ENCODE measurements at regions of chr11 and their contacts with region 1.

Region 1: GRCh38 chr11:250740-251299 is 14.0 kb downstream of the PSMD13 start:
- DNase-seq: no peak
- ATAC-seq: peak; percentile 94
- H3K4me3 ChIP-seq: no peak overlapping the region
- H3K27ac ChIP-seq: no peak overlapping the region
- H3K4me1 ChIP-seq: no peaks in the 10 kb centered on the region
- H3K27me3 ChIP-seq: no peaks in the 10 kb centered on the region
- CTCF ChIP-seq: peak; percentile 61 to 77 (median 64)
- EP300 ChIP-seq: no peak
- POLR2A ChIP-seq: no peak
- RAD21 ChIP-seq: peak; percentile 63

Region 2: GRCh38 chr11:236774-237767 is 13.7 kb before region 1 on chr11 and contains the start of gene PSMD13:
- CTCF ChIA-PET with region 1: interaction called, 26 read pairs
- POLR2A ChIA-PET with region 1: interaction called, 6 read pairs
- RAD21 ChIA-PET with region 1: interaction called, 7 read pairs
- SMC1A ChIA-PET with region 1: interaction called, 38 read pairs
- in situ Hi-C with region 1: no loop called
- intact Hi-C with region 1: no loop called
- DNase-seq: no peak
- ATAC-seq: peak; percentile 95
- H3K4me3 ChIP-seq: peak within 1 kb of the TSS; percentile 80
- H3K27ac ChIP-seq: peak within 1 kb of the TSS; percentile 86
- H3K4me1 ChIP-seq: no peaks in the 10 kb centered on the region
- H3K27me3 ChIP-seq: no peaks in the 10 kb centered on the region
- CTCF ChIP-seq: no peak
- EP300 ChIP-seq: no peak
- POLR2A ChIP-seq: peak; percentile 81
- RAD21 ChIP-seq: no peak
- polyA plus RNA-seq, gene PSMD13: 198 to 221 TPM

Region 3: DNA sequence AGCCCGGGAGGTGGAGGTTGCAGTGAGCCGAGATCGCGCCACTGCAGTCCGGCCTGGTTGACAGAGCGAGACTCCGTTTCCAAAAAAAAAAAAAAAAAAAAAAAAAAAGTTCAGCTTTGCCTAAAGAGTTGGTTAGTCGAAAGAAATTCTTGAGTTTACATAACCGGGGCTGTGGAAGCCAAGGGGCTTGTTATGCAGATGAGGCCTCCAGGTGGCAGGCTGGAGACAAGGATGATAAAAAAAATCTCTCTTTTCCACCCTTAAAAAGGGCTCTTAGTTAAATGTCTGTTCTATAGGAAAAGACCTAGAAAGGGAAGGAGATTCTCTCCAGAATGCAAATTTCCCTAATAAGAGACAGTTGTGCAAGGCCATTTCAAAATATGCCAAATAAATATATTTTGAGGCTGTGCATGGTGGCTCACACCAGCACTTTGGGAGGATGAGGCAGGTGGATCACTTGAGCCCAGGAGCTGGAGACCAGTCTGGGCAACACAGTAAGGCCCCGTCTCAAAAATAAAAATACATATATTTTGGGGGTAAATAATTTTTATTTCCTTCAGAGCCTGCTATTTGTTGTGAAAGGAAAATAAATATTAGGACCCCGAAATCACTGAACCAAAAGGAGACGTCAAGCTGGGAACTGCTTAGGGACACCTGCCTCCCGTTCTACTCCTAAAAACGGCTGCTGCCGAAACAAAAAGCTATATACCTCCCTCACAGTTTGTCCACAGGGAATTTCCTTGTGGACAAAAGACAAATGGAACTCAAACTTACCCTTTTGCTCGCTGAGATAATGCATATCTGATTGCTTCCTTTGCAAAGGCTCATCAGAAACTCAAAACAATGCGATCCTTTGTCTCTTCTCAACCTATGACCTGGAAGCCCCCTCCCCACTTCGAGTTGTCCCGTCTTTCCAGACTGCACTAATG is 54.4 kb after region 1 on chr11:
- CTCF ChIA-PET with region 1: interaction called, 19 read pairs
- POLR2A ChIA-PET with region 1: interaction called, 3 read pairs
- RAD21 ChIA-PET with region 1: interaction called, 8 read pairs
- SMC1A ChIA-PET with region 1: interaction called, 18 read pairs
- in situ Hi-C with region 1: no loop called
- intact Hi-C with region 1: no loop called
- DNase-seq: no peak
- ATAC-seq: 0 out of 3 replicates have a peak, but pooled peaks have one; percentile 12
- H3K4me3 ChIP-seq: no peak overlapping the region
- H3K27ac ChIP-seq: no peak overlapping the region
- H3K4me1 ChIP-seq: peaks cover 20% of the 10 kb centered on the region
- H3K27me3 ChIP-seq: no peaks in the 10 kb centered on the region
- CTCF ChIP-seq: peak; percentile 66 to 67 (median 66)
- EP300 ChIP-seq: no peak
- POLR2A ChIP-seq: no peak
- RAD21 ChIP-seq: peak; percentile 69

Region 4: DNA sequence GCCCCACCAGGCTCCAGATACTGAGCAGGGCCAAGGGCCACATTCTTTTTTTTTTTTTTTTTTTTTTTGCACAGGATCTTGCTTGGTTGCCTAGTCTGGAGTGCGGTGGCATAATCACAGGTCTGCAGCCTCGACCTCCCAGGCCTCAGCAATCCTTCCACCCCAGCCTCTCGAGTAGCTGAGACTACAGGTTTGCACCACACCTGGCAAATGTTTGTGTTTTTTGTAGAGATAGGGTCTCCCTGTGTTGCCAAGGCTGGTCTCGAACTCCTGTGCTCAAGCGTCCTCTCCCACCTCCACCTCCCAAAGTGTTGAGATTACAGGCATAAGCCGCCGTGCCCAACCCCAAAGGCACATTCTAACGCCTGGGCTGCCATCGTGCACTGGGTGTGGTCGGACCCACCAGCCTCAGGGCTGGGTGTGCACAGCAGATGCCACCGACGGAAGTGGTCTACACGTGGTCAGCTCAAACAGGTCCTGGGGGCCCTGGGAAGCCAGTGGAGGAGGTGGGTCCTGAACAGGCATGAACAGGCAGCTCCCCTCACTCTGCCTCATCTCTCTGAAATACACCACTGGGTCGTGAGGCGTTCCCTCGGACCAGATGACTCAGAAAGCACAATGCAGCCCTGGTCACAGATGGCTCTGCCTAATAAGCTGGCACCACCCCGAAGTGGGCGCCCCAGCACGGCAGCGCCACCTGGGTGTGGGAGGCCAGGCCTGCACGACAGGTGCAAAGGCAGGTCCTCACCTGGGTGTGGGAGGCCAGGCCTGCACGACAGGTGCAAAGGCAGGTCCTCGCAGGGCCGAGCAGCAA is 113.3 kb after region 1 on chr11:
- CTCF ChIA-PET with region 1: interaction called, 45 read pairs
- POLR2A ChIA-PET with region 1: no interaction called
- RAD21 ChIA-PET with region 1: interaction called, 9 read pairs
- SMC1A ChIA-PET with region 1: interaction called, 6 read pairs
- in situ Hi-C with region 1: loop called (anchors 5 kb)
- intact Hi-C with region 1: no loop called
- DNase-seq: no peak
- ATAC-seq: peak; percentile 98
- H3K4me3 ChIP-seq: no peak overlapping the region
- H3K27ac ChIP-seq: no peak overlapping the region
- H3K4me1 ChIP-seq: no peaks in the 10 kb centered on the region
- H3K27me3 ChIP-seq: peaks cover 4 to 5% of the 10 kb centered on the region in 2 experiments; a peak in 3 of 4 replicates
- CTCF ChIP-seq: peak; percentile 52 to 73 (median 53); a peak in 5 of 6 replicates
- EP300 ChIP-seq: no peak
- POLR2A ChIP-seq: no peak
- RAD21 ChIP-seq: peak; percentile 39